Activated CD4-positive, alpha-beta memory T cell treated with anti-CD3 and anti-CD28 coated beads, Interleukin-2, amount 10 ng/mL, durations not matched to agents 7 days and 5 days (primary cell): ENCODE measurements at regions of chr11 and their contacts with region 1.

Region 1: GRCh38 chr11:108733479-108734116 is 68.7 kb downstream of the DDX10 start:
- DNase-seq: peak; percentile 21
- H3K4me3 Mint-ChIP-seq: peak overlapping the region; percentile 6
- H3K27ac Mint-ChIP-seq: peak overlapping the region; percentile 16
- H3K4me1 Mint-ChIP-seq: peaks cover 38% of the 10 kb centered on the region
- H3K27me3 Mint-ChIP-seq: no peaks in the 10 kb centered on the region

Region 2: DNA sequence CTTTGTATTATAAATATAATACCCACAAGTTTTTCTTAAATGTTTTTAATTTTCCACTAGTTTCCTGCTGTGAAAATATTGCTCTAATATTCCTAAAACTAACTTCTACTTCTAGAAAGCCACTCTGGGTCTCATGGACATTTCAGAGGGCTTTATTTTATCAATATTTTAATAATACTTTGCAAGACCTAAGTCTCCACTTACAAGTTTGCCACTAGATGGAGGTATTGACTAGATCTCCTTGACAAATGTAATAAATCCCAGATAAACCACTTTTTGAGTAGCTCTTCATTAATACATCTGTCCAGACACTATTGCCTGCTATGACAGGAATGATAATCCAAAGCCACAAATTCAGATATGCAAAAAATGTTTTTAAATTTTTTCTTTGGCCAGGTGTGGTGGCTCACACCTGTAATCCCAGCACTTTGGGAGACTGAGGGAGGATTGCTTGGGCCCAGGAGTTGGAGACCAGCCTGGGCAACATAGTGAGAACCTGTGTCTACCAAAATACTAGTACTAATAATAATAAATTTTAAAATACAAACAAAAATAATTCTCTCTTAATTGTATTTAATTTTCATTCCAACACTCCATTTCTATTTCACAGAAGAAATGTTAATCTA is 615.7 kb before region 1 on chr11:
- CTCF ChIA-PET with region 1: interaction called, 11 read pairs
- POLR2A ChIA-PET with region 1: no interaction called
- DNase-seq: no peak
- H3K4me3 Mint-ChIP-seq: no peak overlapping the region
- H3K27ac Mint-ChIP-seq: no peak overlapping the region
- H3K4me1 Mint-ChIP-seq: peaks cover 25% of the 10 kb centered on the region
- H3K27me3 Mint-ChIP-seq: no peaks in the 10 kb centered on the region

Region 3: DNA sequence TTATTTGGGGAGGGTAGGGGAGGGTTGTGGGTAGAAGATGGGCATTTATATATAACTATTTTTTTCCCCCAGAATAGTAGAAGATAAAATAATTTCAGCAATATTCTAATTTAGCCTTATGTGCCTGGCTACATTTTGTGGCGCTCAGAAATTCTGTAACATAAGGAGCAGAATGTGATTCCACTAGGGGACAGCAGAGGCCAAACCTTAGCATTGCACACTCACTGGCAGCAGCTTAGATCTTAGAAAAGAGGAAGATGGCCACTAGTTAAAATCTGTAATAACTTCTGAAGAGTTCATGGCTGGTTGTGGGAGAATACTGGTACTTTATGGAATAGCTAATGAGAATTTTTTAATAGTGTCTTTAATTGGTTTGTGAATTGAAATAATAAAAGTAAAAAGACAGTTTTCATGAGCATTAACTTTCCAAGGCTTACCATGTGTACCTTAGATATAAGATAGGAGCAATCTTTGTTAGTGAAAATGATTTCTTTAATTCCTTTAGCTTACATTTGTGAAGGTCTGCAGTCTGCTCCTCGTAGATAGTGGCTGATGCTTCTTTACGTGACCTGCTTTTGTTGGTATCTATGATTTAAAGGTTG is 35.6 kb before region 1 on chr11:
- CTCF ChIA-PET with region 1: interaction called, 17 read pairs
- POLR2A ChIA-PET with region 1: no interaction called
- DNase-seq: peak; percentile 45
- H3K4me3 Mint-ChIP-seq: no peak overlapping the region
- H3K27ac Mint-ChIP-seq: no peak overlapping the region
- H3K4me1 Mint-ChIP-seq: no peaks in the 10 kb centered on the region
- H3K27me3 Mint-ChIP-seq: no peaks in the 10 kb centered on the region